Breast epithelium (tissue), 4 donors: ENCODE measurements at regions of chr2 and their contacts with region 1.

Region 1: GRCh38 chr2:180523621-180524340 is 456.6 kb upstream of the UBE2E3 start:
- DNase-seq: no peak
- H3K4me3 ChIP-seq: no peak overlapping the region
- H3K27ac ChIP-seq: peak overlapping the region in 1 of 2 donors; percentile 30
- H3K4me1 ChIP-seq: no peaks in the 10 kb centered on the region
- H3K27me3 ChIP-seq: no peaks in the 10 kb centered on the region
- CTCF ChIP-seq: no peak
- POLR2A ChIP-seq: no peak

Region 2: DNA sequence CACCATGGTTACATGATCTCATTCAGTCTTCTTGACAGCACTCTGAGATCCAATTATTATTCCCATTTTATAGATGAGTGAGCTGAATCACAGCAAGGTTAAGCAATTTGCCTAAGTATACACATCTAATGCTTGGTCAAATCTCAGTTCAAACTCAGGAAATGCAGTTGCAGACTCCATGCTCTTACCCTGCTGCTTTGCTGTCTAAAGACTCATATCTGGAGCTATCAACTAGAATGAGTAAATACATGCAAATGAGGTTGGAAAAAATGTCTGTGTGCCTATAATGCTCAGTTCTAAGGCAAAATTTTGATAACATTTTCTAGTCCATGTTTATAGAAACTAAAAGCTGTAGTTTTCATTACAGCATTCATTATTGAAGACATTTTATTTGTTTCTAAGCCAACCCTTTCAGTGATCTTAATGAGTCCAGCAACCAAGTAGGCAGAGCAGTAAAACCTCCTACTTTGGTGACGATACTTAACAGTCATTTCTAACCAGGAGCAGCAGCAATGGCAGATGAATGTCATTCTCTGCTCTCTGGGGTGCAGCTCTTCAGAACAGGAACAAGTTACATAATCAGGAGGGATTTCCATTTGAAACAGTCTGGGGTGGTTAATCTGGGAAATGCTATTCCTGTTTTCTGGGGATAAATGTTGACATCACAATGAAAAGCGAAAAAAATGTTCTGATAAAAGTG is 59.8 kb after region 1 on chr2:
- intact Hi-C with region 1: loop called (anchors 2 kb)
- DNase-seq: no peak
- H3K4me3 ChIP-seq: no peak overlapping the region
- H3K27ac ChIP-seq: no peak overlapping the region
- H3K4me1 ChIP-seq: no peaks in the 10 kb centered on the region
- H3K27me3 ChIP-seq: no peaks in the 10 kb centered on the region
- CTCF ChIP-seq: no peak
- POLR2A ChIP-seq: no peak

Region 3: GRCh38 chr2:182379241-182379640 is 1855.5 kb after region 1 on chr2:
- intact Hi-C with region 1: loop called (anchors 5 kb)
- DNase-seq: no peak
- H3K4me3 ChIP-seq: no peak overlapping the region
- H3K27ac ChIP-seq: no peak overlapping the region
- H3K4me1 ChIP-seq: no peaks in the 10 kb centered on the region
- H3K27me3 ChIP-seq: no peaks in the 10 kb centered on the region
- CTCF ChIP-seq: no peak
- POLR2A ChIP-seq: no peak